ENCODE measurements at regions of chr17 and their contacts with region 1.

Region 1: GRCh38 chr17:51153210-51154072 is at the start of gene NME1:
- DNase-seq: peak; percentile 93 to 99 (median 96)
- ATAC-seq: peak; percentile 90
- H3K4me3 ChIP-seq: peak within 1 kb of the TSS; percentile 94
- H3K4me3 Mint-ChIP-seq: no peak within 1 kb of the TSS
- H3K27ac ChIP-seq: peak within 1 kb of the TSS; percentile 53 to 74
- H3K27ac Mint-ChIP-seq: no peak within 1 kb of the TSS
- H3K4me1 ChIP-seq: peaks cover 20% of the 10 kb centered on the region
- H3K4me1 Mint-ChIP-seq: peaks cover 13% of the 10 kb centered on the region
- H3K27me3 ChIP-seq: no peaks in the 10 kb centered on the region
- H3K27me3 Mint-ChIP-seq: no peaks in the 10 kb centered on the region
- CTCF ChIP-seq: peak; percentile 81
- total RNA-seq, gene NME1: 11.0 to 15.6 TPM

Region 2: DNA sequence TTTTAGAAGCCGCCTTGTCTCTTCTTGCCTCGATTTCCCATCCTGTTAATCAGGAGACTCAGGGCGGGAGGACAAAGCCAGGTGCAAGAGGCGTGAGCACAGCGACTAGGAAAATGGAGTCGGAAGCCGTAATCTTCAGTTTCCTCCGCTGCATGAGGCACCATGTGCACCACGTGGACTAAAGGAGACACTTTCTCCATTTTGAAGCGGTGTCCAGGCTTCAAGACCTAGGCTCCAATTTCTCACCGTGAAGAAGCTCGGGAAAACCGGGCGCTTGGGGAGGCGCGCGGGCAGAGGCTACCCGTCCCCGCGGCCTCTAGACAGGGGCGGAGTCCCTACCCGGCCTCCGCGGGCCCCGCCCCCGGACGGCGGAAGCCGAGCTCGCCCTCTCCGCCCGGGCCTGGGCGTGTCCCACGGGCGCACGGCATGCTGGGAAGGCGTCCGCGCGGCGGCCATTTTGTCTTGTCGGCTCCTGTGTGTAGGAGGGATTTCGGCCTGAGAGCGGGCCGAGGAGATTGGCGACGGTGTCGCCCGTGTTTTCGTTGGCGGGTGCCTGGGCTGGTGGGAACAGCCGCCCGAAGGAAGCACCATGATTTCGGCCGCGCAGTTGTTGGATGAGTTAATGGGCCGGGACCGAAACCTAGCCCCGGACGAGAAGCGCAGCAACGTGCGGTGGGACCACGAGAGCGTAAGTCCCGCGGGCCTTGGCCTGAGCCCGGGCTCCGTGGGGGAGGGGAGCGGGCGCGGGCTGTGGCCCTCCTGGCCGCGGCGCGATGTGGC is 434.1 kb before region 1 on chr17 and contains the start of gene LUC7L3:
- CTCF ChIA-PET with region 1: no interaction called
- POLR2A ChIA-PET with region 1: interaction called, 7 read pairs
- intact Hi-C with region 1: loop called in 1 of 2 experiments (anchors 5 kb)
- DNase-seq: peak; percentile 84 to 96 (median 90)
- ATAC-seq: peak; percentile 91
- H3K4me3 ChIP-seq: peak within 1 kb of the TSS; percentile 79
- H3K4me3 Mint-ChIP-seq: peak within 1 kb of the TSS; percentile 95
- H3K27ac ChIP-seq: peak within 1 kb of the TSS; percentile 89 to 97
- H3K27ac Mint-ChIP-seq: peak within 1 kb of the TSS; percentile 86
- H3K4me1 ChIP-seq: peaks cover 27% of the 10 kb centered on the region
- H3K4me1 Mint-ChIP-seq: peaks cover 34% of the 10 kb centered on the region
- H3K27me3 ChIP-seq: no peaks in the 10 kb centered on the region
- H3K27me3 Mint-ChIP-seq: no peaks in the 10 kb centered on the region
- CTCF ChIP-seq: no peak
- total RNA-seq, gene LUC7L3: 116 to 126 TPM

Region 3: DNA sequence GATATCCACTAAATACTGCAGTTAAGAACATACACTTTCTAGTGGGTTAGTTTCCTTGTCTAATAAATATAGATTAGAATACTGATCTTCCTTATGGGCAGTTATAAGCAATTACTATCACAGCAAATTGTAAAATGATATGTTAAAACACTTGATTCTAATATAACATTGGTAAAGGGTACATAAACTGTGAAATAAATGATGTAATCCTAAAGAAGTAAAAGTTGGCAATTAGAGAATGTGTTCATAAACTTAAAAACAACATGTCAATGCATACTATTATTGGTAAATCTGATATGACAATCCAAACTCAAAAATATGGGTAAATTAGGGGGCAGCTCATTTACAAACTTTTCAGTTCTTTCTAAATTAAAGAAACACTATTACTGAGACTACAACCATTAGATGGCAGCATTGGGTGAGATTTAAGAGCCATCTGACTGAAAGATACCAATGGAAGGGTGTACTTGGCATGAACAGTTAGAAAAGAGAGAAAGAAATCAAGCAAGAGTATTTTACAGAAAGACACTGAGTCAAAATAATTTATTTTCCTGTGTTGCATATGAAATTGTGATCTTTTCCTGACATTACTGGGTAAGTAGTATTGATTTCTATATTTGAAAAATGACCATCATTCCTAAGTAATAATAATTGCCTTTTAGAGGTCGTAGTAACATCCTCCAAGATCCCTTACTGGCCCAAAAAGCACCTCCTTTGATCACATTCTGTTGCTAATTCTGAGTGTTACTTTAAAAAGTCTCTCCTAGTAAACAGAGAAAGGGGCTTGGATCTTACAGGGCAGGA is 152.4 kb before region 1 on chr17:
- CTCF ChIA-PET with region 1: interaction called, 67 read pairs
- POLR2A ChIA-PET with region 1: interaction called, 26 read pairs
- intact Hi-C with region 1: loop called (anchors 1 kb)
- DNase-seq: peak in 5 of 14 experiments; percentile 2 to 80 (median 79)
- ATAC-seq: peak; percentile 93
- H3K4me3 ChIP-seq: no peak overlapping the region
- H3K4me3 Mint-ChIP-seq: no peak overlapping the region
- H3K27ac ChIP-seq: no peak overlapping the region
- H3K27ac Mint-ChIP-seq: no peak overlapping the region
- H3K4me1 ChIP-seq: no peaks in the 10 kb centered on the region
- H3K4me1 Mint-ChIP-seq: peaks cover 7% of the 10 kb centered on the region
- H3K27me3 ChIP-seq: no peaks in the 10 kb centered on the region
- H3K27me3 Mint-ChIP-seq: no peaks in the 10 kb centered on the region
- CTCF ChIP-seq: peak; percentile 73

Region 4: GRCh38 chr17:51120739-51121617 is 32.5 kb before region 1 on chr17 and contains the start of gene SPAG9:
- CTCF ChIA-PET with region 1: interaction called, 43 read pairs
- POLR2A ChIA-PET with region 1: interaction called, 40 read pairs
- intact Hi-C with region 1: loop called (anchors 1 to 2 kb)
- DNase-seq: peak; percentile 77 to 98 (median 86)
- ATAC-seq: peak; percentile 82
- H3K4me3 ChIP-seq: peak within 1 kb of the TSS; percentile 96
- H3K4me3 Mint-ChIP-seq: peak within 1 kb of the TSS; percentile 97
- H3K27ac ChIP-seq: peak within 1 kb of the TSS; percentile 92
- H3K27ac Mint-ChIP-seq: peak within 1 kb of the TSS; percentile 94
- H3K4me1 ChIP-seq: peaks cover 43% of the 10 kb centered on the region
- H3K4me1 Mint-ChIP-seq: peaks cover 54% of the 10 kb centered on the region
- H3K27me3 ChIP-seq: no peaks in the 10 kb centered on the region
- H3K27me3 Mint-ChIP-seq: no peaks in the 10 kb centered on the region
- CTCF ChIP-seq: no peak
- total RNA-seq, gene SPAG9: 60.2 to 64.6 TPM

Region 5: DNA sequence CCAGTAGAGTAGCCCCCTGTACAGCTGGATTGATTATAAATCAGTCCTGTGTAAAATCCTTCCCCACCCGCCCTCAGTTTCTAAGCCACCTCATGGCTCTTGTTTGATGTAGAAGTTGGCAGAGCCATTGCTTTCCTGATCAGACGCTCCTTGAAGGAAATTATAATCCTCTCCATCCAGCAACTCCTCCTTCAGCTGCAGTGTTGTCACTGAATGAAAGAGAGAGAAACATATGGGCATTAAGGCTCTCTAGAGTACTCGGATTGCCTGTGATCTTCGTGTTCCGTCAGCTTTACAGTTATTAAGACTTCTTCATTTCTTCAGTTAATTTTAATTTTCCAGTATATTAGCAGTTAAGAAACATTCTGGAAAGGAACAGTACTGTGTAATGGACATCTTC is 27.0 kb after region 1 on chr17:
- CTCF ChIA-PET with region 1: no interaction called
- POLR2A ChIA-PET with region 1: no interaction called
- intact Hi-C with region 1: no loop called
- DNase-seq: no peak
- ATAC-seq: no peak
- H3K4me3 ChIP-seq: no peak overlapping the region
- H3K4me3 Mint-ChIP-seq: no peak overlapping the region
- H3K27ac ChIP-seq: no peak overlapping the region
- H3K27ac Mint-ChIP-seq: no peak overlapping the region
- H3K4me1 ChIP-seq: no peaks in the 10 kb centered on the region
- H3K4me1 Mint-ChIP-seq: no peaks in the 10 kb centered on the region
- H3K27me3 ChIP-seq: no peaks in the 10 kb centered on the region
- H3K27me3 Mint-ChIP-seq: no peaks in the 10 kb centered on the region
- CTCF ChIP-seq: no peak

Region 6: GRCh38 chr17:51200295-51200694 is 46.9 kb after region 1 on chr17:
- CTCF ChIA-PET with region 1: no interaction called
- POLR2A ChIA-PET with region 1: no interaction called
- intact Hi-C with region 1: no loop called
- DNase-seq: peak in 8 of 14 experiments; percentile 2 to 52 (median 10)
- ATAC-seq: peak; percentile 73
- H3K4me3 ChIP-seq: no peak overlapping the region
- H3K4me3 Mint-ChIP-seq: no peak overlapping the region
- H3K27ac ChIP-seq: no peak overlapping the region
- H3K27ac Mint-ChIP-seq: peak overlapping the region; percentile 44
- H3K4me1 ChIP-seq: peaks cover 12% of the 10 kb centered on the region
- H3K4me1 Mint-ChIP-seq: peaks cover 5% of the 10 kb centered on the region
- H3K27me3 ChIP-seq: no peaks in the 10 kb centered on the region
- H3K27me3 Mint-ChIP-seq: no peaks in the 10 kb centered on the region
- CTCF ChIP-seq: no peak

Region 7: GRCh38 chr17:51214920-51215319 is 61.5 kb after region 1 on chr17:
- CTCF ChIA-PET with region 1: no interaction called
- POLR2A ChIA-PET with region 1: no interaction called
- intact Hi-C with region 1: no loop called
- DNase-seq: no peak
- ATAC-seq: no peak
- H3K4me3 ChIP-seq: no peak overlapping the region
- H3K4me3 Mint-ChIP-seq: no peak overlapping the region
- H3K27ac ChIP-seq: peak overlapping the region in 1 of 2 donors; percentile 3
- H3K27ac Mint-ChIP-seq: no peak overlapping the region
- H3K4me1 ChIP-seq: no peaks in the 10 kb centered on the region
- H3K4me1 Mint-ChIP-seq: no peaks in the 10 kb centered on the region
- H3K27me3 ChIP-seq: no peaks in the 10 kb centered on the region
- H3K27me3 Mint-ChIP-seq: no peaks in the 10 kb centered on the region
- CTCF ChIP-seq: no peak

Region 8: GRCh38 chr17:51260125-51260880 is 106.9 kb after region 1 on chr17 and contains the start of gene UTP18:
- CTCF ChIA-PET with region 1: interaction called, 3 read pairs
- POLR2A ChIA-PET with region 1: interaction called, 14 read pairs
- intact Hi-C with region 1: loop called in 1 of 2 experiments (anchors 5 kb)
- DNase-seq: peak; percentile 89 to 99 (median 96)
- ATAC-seq: peak; percentile 87
- H3K4me3 ChIP-seq: peak within 1 kb of the TSS; percentile 90
- H3K4me3 Mint-ChIP-seq: peak within 1 kb of the TSS; percentile 99
- H3K27ac ChIP-seq: peak within 1 kb of the TSS; percentile 96 to 99
- H3K27ac Mint-ChIP-seq: peak within 1 kb of the TSS; percentile 99
- H3K4me1 ChIP-seq: peaks cover 36% of the 10 kb centered on the region
- H3K4me1 Mint-ChIP-seq: peaks cover 85% of the 10 kb centered on the region
- H3K27me3 ChIP-seq: no peaks in the 10 kb centered on the region
- H3K27me3 Mint-ChIP-seq: no peaks in the 10 kb centered on the region
- CTCF ChIP-seq: no peak
- total RNA-seq, gene UTP18: 48.5 to 49.8 TPM

Measured in CD4-positive, alpha-beta T cell (primary cell).